ENCODE measurements at regions of chr6 and their contacts with region 1.

Region 1: GRCh38 chr6:83215131-83216047 is 22.2 kb downstream of the RWDD2A start:
- DNase-seq: peak; percentile 66
- ATAC-seq: peak; percentile 99
- H3K4me3 ChIP-seq: no peak overlapping the region
- H3K27ac ChIP-seq: no peak overlapping the region
- H3K4me1 ChIP-seq: no peaks in the 10 kb centered on the region
- H3K27me3 ChIP-seq: no peaks in the 10 kb centered on the region; a peak in 1 of 5 replicates
- CTCF ChIP-seq: peak; percentile 89
- EP300 ChIP-seq: no peak
- POLR2A ChIP-seq: no peak
- RAD21 ChIP-seq: peak; percentile 69; the same call in 1 of the 2 replicates

Region 2: GRCh38 chr6:83067448-83068413 is 147.7 kb before region 1 on chr6 and contains the start of gene DOP1A:
- CTCF ChIA-PET with region 1: interaction called, 19 read pairs
- POLR2A ChIA-PET with region 1: interaction called, 6 read pairs
- in situ Hi-C with region 1: loop called (anchors 5 kb)
- intact Hi-C with region 1: loop called (anchors 1 kb)
- DNase-seq: peak; percentile 86
- ATAC-seq: peak; percentile 91
- H3K4me3 ChIP-seq: peak within 1 kb of the TSS; percentile 79 to 87 (median 86)
- H3K27ac ChIP-seq: peak within 1 kb of the TSS; percentile 85
- H3K4me1 ChIP-seq: peaks cover 30% of the 10 kb centered on the region
- H3K27me3 ChIP-seq: no peaks in the 10 kb centered on the region; a peak in 1 of 5 replicates
- CTCF ChIP-seq: peak; percentile 97
- EP300 ChIP-seq: no peak
- POLR2A ChIP-seq: peak; percentile 67 to 76
- RAD21 ChIP-seq: peak; percentile 89
- total RNA-seq, gene DOP1A: 16.7 and 18.9 TPM in 2 replicates

Region 3: DNA sequence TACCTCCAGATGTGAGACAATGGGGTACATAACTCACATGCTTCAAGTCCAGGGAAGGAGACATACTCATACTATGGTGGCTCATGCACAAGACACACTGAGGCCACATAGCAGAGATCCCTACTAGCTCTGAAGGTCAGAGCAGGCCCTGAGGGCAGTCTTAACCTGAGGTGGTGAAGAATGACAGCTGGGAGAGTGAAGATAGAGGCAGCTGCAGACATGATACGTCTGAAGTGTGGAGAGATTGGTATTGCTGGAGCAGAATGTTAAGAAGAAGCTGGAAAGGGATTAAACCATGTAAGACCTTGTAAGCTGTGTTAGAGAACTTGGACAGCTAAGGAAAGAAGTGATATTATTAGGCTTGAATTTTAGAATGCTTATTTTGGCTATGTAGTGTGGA is 55.2 kb before region 1 on chr6:
- CTCF ChIA-PET with region 1: no interaction called
- POLR2A ChIA-PET with region 1: no interaction called
- in situ Hi-C with region 1: no loop called
- intact Hi-C with region 1: loop called (anchors 5 kb)
- DNase-seq: no peak
- ATAC-seq: no peak
- H3K4me3 ChIP-seq: no peak overlapping the region
- H3K27ac ChIP-seq: no peak overlapping the region
- H3K4me1 ChIP-seq: no peaks in the 10 kb centered on the region
- H3K27me3 ChIP-seq: no peaks in the 10 kb centered on the region
- CTCF ChIP-seq: no peak
- EP300 ChIP-seq: no peak
- POLR2A ChIP-seq: no peak
- RAD21 ChIP-seq: no peak

Region 4: DNA sequence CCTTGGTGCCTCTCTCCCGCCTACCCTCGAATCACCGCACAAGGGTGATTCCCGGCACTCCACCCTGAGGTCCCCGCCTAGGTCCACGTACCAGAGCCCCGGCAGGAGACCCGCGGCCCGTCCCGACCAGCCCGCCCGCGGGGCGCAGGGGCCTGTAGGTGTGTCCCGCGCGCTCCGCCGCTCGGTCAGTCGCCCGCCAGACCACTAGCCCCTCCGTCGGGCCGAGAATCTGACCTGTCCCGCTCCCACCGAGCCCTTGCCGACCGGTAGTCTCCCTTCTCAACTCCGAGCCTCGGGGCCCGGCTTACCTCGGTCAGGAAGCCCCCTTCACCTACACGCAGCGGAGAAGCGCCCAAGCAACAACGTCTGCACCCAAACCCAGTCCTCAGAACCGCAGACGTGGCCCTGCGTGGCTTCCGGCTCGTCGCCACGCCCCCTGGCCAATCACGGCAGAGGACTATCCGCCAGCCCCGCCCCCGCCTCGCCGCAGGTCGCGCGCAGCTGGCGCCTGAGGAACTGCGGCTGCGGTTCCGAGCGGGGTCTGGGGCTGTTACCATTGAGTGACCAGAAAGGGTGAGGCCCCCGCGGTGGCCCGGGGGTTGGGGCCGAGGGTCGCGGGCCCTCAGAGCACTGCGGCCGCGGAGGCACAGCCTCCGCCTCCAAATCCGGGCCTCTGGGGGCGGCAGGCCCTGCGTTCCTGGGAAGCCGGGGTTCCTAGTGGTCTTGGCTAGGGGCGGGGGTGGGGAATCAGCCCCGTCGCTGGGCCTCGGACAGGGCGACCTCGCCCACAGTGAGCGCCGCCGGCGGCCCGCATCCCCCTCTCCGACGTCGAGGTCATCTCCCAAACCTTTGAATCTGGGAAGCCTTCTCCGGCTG is 22.3 kb before region 1 on chr6 and contains the starts of genes PGM3 and RWDD2A:
- CTCF ChIA-PET with region 1: no interaction called
- POLR2A ChIA-PET with region 1: interaction called, 4 read pairs
- in situ Hi-C with region 1: no loop called
- intact Hi-C with region 1: loop called (anchors 1 kb)
- DNase-seq: peak; percentile 84
- ATAC-seq: peak; percentile 95
- H3K4me3 ChIP-seq: peak within 1 kb of the TSS; percentile 90 to 98 (median 97)
- H3K27ac ChIP-seq: peak within 1 kb of the TSS; percentile 95
- H3K4me1 ChIP-seq: peaks cover 45% of the 10 kb centered on the region
- H3K27me3 ChIP-seq: no peaks in the 10 kb centered on the region; a peak in 1 of 5 replicates
- CTCF ChIP-seq: no peak
- EP300 ChIP-seq: no peak
- POLR2A ChIP-seq: peak; percentile 94
- RAD21 ChIP-seq: peak; percentile 38; the same call in 1 of the 2 replicates
- total RNA-seq, gene PGM3: 163 and 231 TPM in 2 replicates
- total RNA-seq, gene RWDD2A: 5.3 and 6.9 TPM in 2 replicates

Measured in HepG2 (cell line).